ENCODE measurements at regions of chr11 and their contacts with region 1.

Region 1: DNA sequence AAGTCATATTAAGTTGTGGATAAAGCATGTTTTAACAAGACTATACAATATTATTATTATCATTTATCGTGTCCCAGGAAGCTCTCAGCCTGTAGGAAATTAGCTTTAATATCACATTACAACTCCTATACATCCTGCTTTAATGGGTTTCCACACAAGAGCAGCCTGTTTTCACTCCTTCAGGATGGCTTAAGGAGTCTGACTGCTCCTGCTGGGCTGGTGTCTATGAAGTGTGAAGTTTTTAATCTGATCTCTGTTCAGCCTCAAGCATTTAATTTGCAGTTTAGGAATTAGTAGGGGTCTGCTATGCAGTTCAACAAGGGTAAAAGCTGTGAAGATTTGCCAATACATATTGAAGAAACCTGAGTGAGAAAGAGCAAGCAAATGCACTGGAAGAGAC is 653.4 kb upstream of the LRRC4C start:
- DNase-seq: no peak
- H3K4me3 ChIP-seq: no peak overlapping the region
- H3K27ac ChIP-seq: no peak overlapping the region
- H3K4me1 ChIP-seq: no peaks in the 10 kb centered on the region
- H3K27me3 ChIP-seq: no peaks in the 10 kb centered on the region
- CTCF ChIP-seq: no peak
- POLR2A ChIP-seq: no peak

Region 2: DNA sequence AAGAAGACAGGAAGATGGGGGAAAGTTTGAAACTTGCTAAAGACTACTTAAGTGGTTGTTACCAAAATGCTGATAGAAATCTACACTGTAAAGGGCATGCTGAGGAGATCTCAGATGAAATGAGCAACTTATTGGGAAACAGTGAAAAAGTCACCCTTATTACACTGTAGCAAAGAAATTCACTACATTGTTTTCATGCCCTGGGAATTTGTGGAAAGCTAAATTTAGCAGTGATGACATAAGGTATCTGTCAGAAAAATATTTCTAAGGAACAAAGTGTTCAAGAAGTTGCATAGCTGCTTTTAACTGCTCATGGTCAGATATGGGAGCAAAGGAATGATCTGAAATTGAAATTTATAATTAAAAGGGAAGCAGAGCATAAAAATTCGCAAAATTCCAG is 49.0 kb after region 1 on chr11:
- CTCF ChIA-PET with region 1: no interaction called
- POLR2A ChIA-PET with region 1: no interaction called
- dilution Hi-C with region 1: no loop called
- intact Hi-C with region 1: loop called (anchors 2 kb)
- DNase-seq: no peak
- H3K4me3 ChIP-seq: no peak overlapping the region
- H3K27ac ChIP-seq: no peak overlapping the region
- H3K4me1 ChIP-seq: no peaks in the 10 kb centered on the region
- H3K27me3 ChIP-seq: no peaks in the 10 kb centered on the region
- CTCF ChIP-seq: no peak
- POLR2A ChIP-seq: no peak

Measured in endothelial cell of umbilical vein (primary cell).